ENCODE measurements at regions of chr1 and their contacts with region 1.

Region 1: DNA sequence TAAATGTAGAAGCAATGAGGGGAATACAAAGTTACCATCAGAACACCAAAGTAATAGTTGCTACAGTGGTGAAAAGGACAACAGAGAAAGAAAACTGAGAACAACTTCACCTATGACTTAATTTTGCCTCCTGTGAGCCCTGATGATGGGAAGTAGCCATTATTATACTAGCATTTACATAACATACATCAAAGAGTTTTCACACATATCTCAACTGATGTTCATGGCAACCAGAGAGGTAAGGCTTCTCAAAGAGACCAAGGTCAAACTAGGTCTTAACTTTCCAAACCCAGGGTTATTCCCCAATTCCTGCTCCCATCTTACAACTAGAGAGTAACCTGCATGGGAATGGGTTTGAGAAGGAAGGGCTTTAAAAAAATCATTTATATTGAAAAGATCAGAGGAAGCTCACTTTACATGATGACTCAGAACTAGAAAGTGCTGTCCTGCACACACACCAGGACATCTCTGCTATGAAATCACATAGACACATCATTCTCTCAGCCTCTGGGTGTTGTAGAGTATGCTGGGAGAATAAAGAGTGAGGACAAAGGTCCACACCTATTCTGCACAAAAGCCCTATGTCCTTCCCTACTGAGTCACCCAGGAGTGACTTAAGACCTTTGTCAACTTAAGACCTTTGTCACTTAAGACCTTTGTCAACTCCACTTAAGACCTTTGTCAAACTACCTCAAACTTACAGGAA is 179.7 kb downstream of the TNFSF18 start:
- DNase-seq: no peak
- H3K4me3 Mint-ChIP-seq: no peak overlapping the region
- H3K27ac Mint-ChIP-seq: no peak overlapping the region
- H3K4me1 Mint-ChIP-seq: peaks cover 32% of the 10 kb centered on the region
- H3K27me3 Mint-ChIP-seq: peaks cover 39% of the 10 kb centered on the region

Region 2: DNA sequence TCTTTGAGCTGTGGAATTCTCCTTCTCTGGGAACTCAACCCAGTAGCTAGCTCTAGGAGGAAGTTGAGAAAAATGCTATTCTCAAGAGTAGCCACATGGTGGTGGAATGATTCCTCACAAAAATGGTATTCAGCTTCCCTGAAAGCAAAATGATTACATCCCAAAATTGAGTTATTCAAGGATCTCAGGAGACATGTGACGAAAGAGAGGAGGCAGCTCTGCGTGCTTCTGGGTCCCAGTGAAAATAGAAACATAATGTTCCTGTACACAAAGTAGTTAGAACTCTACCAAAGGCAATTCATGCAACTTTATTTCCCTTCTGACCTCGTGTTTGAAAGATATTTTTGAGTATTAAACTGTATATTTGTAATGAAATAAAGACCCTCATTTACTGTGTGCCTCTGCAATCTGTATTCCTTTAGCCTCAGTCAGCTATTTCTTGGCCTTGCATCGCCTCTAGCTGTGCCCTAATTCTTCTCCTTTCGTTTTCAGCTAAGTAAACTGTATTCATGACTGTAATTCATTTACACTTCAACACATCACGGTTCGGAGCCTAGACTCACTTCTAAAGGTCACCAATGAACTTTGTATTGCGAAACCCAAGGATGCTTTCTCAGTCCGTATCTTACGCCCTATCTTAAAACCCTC is 44.8 kb before region 1 on chr1:
- intact Hi-C with region 1: loop called (anchors 2 kb)
- DNase-seq: no peak
- H3K4me3 Mint-ChIP-seq: no peak overlapping the region
- H3K27ac Mint-ChIP-seq: no peak overlapping the region
- H3K4me1 Mint-ChIP-seq: no peaks in the 10 kb centered on the region
- H3K27me3 Mint-ChIP-seq: peaks cover 14% of the 10 kb centered on the region

Region 3: DNA sequence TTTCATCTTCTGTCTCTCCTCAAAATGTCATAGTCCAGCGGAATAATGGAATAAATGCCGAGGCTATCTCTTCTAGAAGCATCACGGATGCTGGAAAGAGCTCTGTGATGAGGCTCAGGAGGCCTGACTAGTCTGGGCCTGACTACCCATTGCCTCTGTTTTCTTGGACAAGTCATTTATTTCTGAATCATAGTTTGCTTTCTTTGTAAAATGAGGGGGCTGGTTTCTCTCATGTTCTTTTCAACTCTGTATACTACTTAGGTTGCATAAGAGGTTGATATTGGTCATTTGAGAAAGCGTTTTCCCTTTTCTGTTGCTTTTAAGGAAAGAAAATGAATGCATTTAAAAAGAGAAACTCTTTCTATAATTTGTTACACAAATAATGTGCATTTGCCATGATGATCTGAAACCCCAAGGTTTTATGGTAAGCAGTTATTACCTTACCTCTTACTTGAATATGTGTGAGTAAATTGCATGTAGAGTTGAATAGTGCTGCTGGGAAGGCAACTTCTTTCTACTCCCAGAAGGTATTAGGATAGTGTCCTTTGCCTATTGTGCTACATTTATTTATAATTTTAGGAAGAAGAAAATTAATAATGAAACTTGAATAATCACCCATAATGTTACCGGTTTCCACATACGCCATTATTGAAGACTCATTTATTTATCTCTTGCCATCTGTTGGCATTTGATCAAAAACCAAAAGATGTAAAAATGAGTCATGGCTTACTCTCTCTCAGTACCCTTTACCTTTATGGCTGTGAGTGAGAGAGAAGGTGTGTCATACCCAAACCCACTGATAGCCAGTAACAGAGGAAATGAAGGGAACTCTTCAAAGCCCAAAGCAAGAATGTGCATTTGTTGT is 33.0 kb before region 1 on chr1:
- intact Hi-C with region 1: loop called (anchors 1 kb)
- DNase-seq: peak; percentile 29
- H3K4me3 Mint-ChIP-seq: no peak overlapping the region
- H3K27ac Mint-ChIP-seq: peak overlapping the region; percentile 26
- H3K4me1 Mint-ChIP-seq: peaks cover 46% of the 10 kb centered on the region
- H3K27me3 Mint-ChIP-seq: peaks cover 65% of the 10 kb centered on the region

Region 4: DNA sequence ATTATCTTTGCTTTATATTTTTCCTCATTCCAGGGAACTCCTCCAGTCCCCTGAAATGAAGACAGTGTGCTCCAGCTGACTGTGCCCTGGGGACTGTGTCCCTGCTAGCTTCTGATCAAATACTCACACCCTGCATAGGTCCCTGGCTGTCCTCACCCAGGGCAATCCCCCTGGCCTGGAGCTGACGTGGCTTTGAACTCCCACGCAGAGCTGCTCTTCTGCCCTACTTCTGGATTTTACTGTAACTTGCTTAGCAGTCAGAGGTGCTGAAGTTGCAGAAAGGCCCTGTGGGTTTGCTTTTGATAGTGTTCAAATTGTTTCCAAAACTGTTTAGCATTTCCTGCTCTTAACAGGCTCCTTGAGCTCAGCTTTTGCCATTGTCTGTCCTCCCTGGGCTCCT is 25.7 kb before region 1 on chr1:
- intact Hi-C with region 1: loop called (anchors 1 kb)
- DNase-seq: peak; percentile 44
- H3K4me3 Mint-ChIP-seq: peak overlapping the region; percentile 23
- H3K27ac Mint-ChIP-seq: peak overlapping the region; percentile 44
- H3K4me1 Mint-ChIP-seq: peaks cover 33% of the 10 kb centered on the region
- H3K27me3 Mint-ChIP-seq: peaks cover 45% of the 10 kb centered on the region

Region 5: GRCh38 chr1:172883107-172883791 is 12.2 kb after region 1 on chr1:
- intact Hi-C with region 1: loop called (anchors 1 kb)
- DNase-seq: no peak
- H3K4me3 Mint-ChIP-seq: no peak overlapping the region
- H3K27ac Mint-ChIP-seq: peak overlapping the region; percentile 46
- H3K4me1 Mint-ChIP-seq: peaks cover 14% of the 10 kb centered on the region
- H3K27me3 Mint-ChIP-seq: peaks cover 65% of the 10 kb centered on the region

Region 6: GRCh38 chr1:172935062-172935592 is 64.1 kb after region 1 on chr1:
- intact Hi-C with region 1: loop called (anchors 2 kb)
- DNase-seq: no peak
- H3K4me3 Mint-ChIP-seq: no peak overlapping the region
- H3K27ac Mint-ChIP-seq: no peak overlapping the region
- H3K4me1 Mint-ChIP-seq: peaks cover 14% of the 10 kb centered on the region
- H3K27me3 Mint-ChIP-seq: peaks cover 8% of the 10 kb centered on the region

Measured in activated T-helper 1 cell treated with anti-CD3 and anti-CD28 coated beads, Interleukin-12 subunit alpha, Interleukin-12 subunit beta, Interleukin-2, Interleukin-4 antibody, amounts not matched to agents 30 ng/mL and 10 ng/mL and 1 ng/mL, durations not matched to agents 14 hours and 24 hours and 36 hours (primary cell).